Natural killer cell (primary cell): ENCODE measurements at regions of chr14 and their contacts with region 1.

Region 1: DNA sequence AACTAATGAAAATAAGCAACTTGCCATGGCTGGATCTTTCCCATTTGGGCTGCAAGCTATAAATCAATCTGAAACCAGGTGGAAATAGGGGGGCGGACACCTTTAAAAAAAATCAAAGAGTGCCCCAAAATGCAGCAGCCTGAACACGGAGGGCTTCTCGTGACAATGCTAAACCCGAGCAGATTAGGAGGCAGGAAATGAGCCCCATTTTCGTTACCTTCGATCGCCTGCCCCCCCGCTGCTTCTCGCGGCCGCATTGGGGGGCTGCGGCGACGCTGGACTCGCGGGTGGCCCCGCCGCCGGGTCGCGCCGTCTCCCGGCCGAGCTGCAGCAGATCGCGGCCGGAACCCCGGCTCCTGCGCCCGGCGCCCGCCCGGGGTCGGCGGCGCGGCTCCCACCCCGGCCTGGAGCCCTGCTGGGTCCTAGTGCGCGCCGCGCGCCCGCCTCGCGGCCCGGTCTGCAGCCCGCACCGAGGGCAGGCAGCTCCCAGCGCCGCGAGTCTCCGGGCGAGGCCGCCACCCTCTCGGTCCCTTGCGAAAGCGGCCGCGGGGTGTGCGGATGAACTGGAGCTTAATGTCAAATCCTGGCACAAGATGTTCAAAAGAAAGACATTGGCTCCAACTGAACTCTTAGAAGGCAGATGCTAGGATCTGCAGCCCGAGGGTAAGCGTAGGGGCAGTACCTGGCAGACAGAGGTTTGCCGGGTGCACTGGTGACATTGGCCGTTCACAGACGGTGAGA is 201.9 kb upstream of the FOXN3 start:
- DNase-seq: peak; percentile 70 to 84
- ATAC-seq: peak; percentile 38 to 71 (median 68)
- H3K4me3 ChIP-seq: peak overlapping the region; percentile 85
- H3K4me3 Mint-ChIP-seq: peak overlapping the region; percentile 97
- H3K27ac ChIP-seq: peak overlapping the region; percentile 96
- H3K27ac Mint-ChIP-seq: peak overlapping the region; percentile 90 to 98
- H3K4me1 ChIP-seq: peaks cover 24% of the 10 kb centered on the region
- H3K4me1 Mint-ChIP-seq: peaks cover 55 to 60% of the 10 kb centered on the region in 2 donors
- H3K27me3 ChIP-seq: no peaks in the 10 kb centered on the region
- H3K27me3 Mint-ChIP-seq: no peaks in the 10 kb centered on the region
- CTCF ChIP-seq: no peak

Region 2: GRCh38 chr14:89359477-89360222 is 259.3 kb before region 1 on chr14:
- intact Hi-C with region 1: loop called (anchors 5 kb)
- DNase-seq: no peak
- ATAC-seq: no peak
- H3K4me3 ChIP-seq: no peak overlapping the region
- H3K4me3 Mint-ChIP-seq: peak overlapping the region; percentile 67
- H3K27ac ChIP-seq: no peak overlapping the region
- H3K27ac Mint-ChIP-seq: peak overlapping the region; percentile 67 to 85
- H3K4me1 ChIP-seq: peaks cover 25% of the 10 kb centered on the region
- H3K4me1 Mint-ChIP-seq: peaks cover 37 to 58% of the 10 kb centered on the region in 2 donors
- H3K27me3 ChIP-seq: no peaks in the 10 kb centered on the region
- H3K27me3 Mint-ChIP-seq: no peaks in the 10 kb centered on the region
- CTCF ChIP-seq: no peak

Region 3: DNA sequence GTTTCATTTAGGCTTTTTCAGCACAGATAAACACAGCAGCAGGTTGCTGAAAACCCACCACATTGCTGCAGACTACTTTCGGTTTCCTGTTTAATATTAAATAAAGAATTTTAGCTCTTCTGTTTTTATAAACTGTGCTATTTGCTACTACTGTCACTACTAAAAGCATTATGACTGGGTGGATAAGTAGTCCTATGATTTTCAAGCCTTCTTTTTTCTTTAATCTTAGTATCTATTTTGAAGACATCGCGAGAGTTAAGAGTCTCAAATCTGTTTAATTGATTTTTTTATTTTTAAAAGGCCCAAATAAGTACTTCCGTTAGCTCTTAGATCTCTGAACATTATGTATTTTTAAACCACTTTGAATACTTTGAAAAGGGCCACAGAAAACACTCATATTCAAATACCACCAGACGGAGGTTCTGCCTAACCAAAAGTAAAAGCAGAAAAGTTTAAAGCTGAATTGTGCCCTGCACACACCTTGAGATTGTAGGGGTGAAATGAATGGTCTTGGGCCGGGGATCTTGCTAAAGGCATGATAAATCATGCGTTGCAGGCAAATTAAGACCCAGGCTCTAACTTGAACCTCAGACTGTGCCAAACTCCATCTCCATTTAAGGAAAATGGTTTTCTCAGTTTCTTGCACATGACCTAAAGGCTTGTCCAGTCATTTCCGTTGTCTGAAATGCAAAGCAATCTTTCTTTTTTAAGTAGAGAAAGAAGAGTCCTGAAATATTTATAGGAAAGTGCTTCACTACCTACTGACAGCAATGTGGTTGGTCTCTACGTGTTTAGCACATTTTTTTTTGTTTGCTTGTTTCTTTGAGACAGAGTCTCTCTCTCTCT is 188.4 kb before region 1 on chr14:
- intact Hi-C with region 1: loop called (anchors 2 kb)
- DNase-seq: peak in 1 of 2 donors; percentile 77
- ATAC-seq: peak; percentile 63 to 72 (median 69)
- H3K4me3 ChIP-seq: peak overlapping the region; percentile 46
- H3K4me3 Mint-ChIP-seq: peak overlapping the region; percentile 97
- H3K27ac ChIP-seq: peak overlapping the region; percentile 85
- H3K27ac Mint-ChIP-seq: peak overlapping the region; percentile 96 to 98
- H3K4me1 ChIP-seq: peaks cover 75% of the 10 kb centered on the region
- H3K4me1 Mint-ChIP-seq: peaks cover 53 to 69% of the 10 kb centered on the region in 2 donors
- H3K27me3 ChIP-seq: no peaks in the 10 kb centered on the region
- H3K27me3 Mint-ChIP-seq: no peaks in the 10 kb centered on the region
- CTCF ChIP-seq: no peak

Region 4: GRCh38 chr14:89509891-89510290 is 109.1 kb before region 1 on chr14:
- intact Hi-C with region 1: loop called (anchors 2 kb)
- DNase-seq: no peak
- ATAC-seq: no peak
- H3K4me3 ChIP-seq: no peak overlapping the region
- H3K4me3 Mint-ChIP-seq: peak overlapping the region; percentile 76
- H3K27ac ChIP-seq: peak overlapping the region; percentile 49
- H3K27ac Mint-ChIP-seq: peak overlapping the region; percentile 97
- H3K4me1 ChIP-seq: peaks cover 38% of the 10 kb centered on the region
- H3K4me1 Mint-ChIP-seq: peaks cover 61 to 65% of the 10 kb centered on the region in 2 donors
- H3K27me3 ChIP-seq: no peaks in the 10 kb centered on the region
- H3K27me3 Mint-ChIP-seq: no peaks in the 10 kb centered on the region
- CTCF ChIP-seq: no peak

Region 5: GRCh38 chr14:89773644-89774316 is 154.8 kb after region 1 on chr14:
- intact Hi-C with region 1: loop called (anchors 5 kb)
- DNase-seq: peak; percentile 59 to 82
- ATAC-seq: peak; percentile 83 to 93 (median 89)
- H3K4me3 ChIP-seq: no peak overlapping the region
- H3K4me3 Mint-ChIP-seq: peak overlapping the region; percentile 74
- H3K27ac ChIP-seq: peak overlapping the region; percentile 28
- H3K27ac Mint-ChIP-seq: peak overlapping the region; percentile 76 to 83
- H3K4me1 ChIP-seq: peaks cover 27% of the 10 kb centered on the region
- H3K4me1 Mint-ChIP-seq: peaks cover 16 to 17% of the 10 kb centered on the region in 2 donors
- H3K27me3 ChIP-seq: no peaks in the 10 kb centered on the region
- H3K27me3 Mint-ChIP-seq: peaks cover 0 to 7% of the 10 kb centered on the region in 2 donors
- CTCF ChIP-seq: no peak

Region 6: GRCh38 chr14:89870316-89870715 is 251.3 kb after region 1 on chr14:
- intact Hi-C with region 1: no loop called
- DNase-seq: no peak
- ATAC-seq: no peak
- H3K4me3 ChIP-seq: no peak overlapping the region
- H3K4me3 Mint-ChIP-seq: no peak overlapping the region
- H3K27ac ChIP-seq: no peak overlapping the region
- H3K27ac Mint-ChIP-seq: no peak overlapping the region
- H3K4me1 ChIP-seq: no peaks in the 10 kb centered on the region
- H3K4me1 Mint-ChIP-seq: no peaks in the 10 kb centered on the region
- H3K27me3 ChIP-seq: no peaks in the 10 kb centered on the region
- H3K27me3 Mint-ChIP-seq: no peaks in the 10 kb centered on the region
- CTCF ChIP-seq: no peak